Left lung (tissue), 14 donors: ENCODE measurements at regions of chr13 and their contacts with region 1.

Region 1: GRCh38 chr13:99033814-99034213 is 56.0 kb upstream of the DOCK9 start:
- DNase-seq: peak in 1 of 4 donors; percentile 40
- ATAC-seq: peak; percentile 86
- H3K4me3 ChIP-seq: no peak overlapping the region
- H3K27ac ChIP-seq: no peak overlapping the region
- H3K4me1 ChIP-seq: peaks cover 0 to 12% of the 10 kb centered on the region in 2 donors
- H3K27me3 ChIP-seq: peaks cover 0 to 80% of the 10 kb centered on the region in 2 donors
- CTCF ChIP-seq: peak; percentile 46 to 52

Region 2: DNA sequence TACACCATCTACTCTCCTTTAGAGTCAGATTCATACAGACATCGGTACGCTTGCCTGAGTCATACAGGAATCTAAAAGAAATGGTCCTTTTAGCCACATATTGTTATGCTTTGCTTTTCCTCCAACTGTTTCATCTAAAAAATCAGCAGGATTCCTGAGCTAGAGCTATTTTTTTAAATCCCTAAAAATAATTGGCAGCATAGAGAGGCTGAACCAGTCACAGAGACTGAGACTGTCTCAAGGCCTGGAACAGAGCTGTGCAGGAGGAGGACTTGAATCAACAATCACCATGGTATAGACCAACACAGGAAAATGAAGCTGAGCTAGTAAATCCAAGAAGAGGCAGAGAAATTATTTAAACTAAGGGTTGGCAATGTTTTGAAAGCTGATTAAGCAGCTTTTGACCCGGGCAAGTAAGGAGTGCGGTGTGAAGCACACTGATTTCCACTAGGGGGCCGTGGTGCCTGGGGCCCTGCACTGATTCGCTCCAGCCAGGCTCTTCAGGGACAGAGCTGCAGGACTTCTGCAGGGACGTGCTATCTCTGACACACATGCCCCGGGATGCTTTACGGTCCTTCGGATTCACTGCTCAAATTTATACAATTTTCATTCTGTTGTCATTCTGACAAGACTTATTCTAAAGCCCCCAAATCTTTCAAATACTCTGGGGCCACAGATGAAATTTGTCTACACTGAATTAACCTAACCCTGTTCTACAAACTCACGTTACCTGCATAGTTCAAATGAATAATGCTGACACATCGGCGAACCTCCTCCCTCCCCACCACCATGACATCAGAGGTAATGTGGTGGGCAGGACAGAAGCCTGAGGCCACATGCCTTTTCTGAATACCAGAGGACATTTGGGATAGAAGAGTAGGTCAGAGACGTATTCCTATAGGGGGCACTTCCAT is 193.7 kb before region 1 on chr13:
- intact Hi-C with region 1: loop called in 1 of 2 experiments (anchors 10 kb)
- DNase-seq: peak in 1 of 4 donors; percentile 57
- ATAC-seq: peak; percentile 93
- H3K4me3 ChIP-seq: no peak overlapping the region
- H3K27ac ChIP-seq: no peak overlapping the region
- H3K4me1 ChIP-seq: peaks cover 0 to 7% of the 10 kb centered on the region in 2 donors
- H3K27me3 ChIP-seq: no peaks in the 10 kb centered on the region
- CTCF ChIP-seq: peak; percentile 77 to 81

Region 3: GRCh38 chr13:98890186-98890585 is 143.6 kb before region 1 on chr13:
- intact Hi-C with region 1: loop called in 1 of 2 experiments (anchors 10 kb)
- DNase-seq: no peak
- ATAC-seq: peak; percentile 29
- H3K4me3 ChIP-seq: no peak overlapping the region
- H3K27ac ChIP-seq: no peak overlapping the region
- H3K4me1 ChIP-seq: peaks cover 6 to 20% of the 10 kb centered on the region in 2 donors
- H3K27me3 ChIP-seq: no peaks in the 10 kb centered on the region
- CTCF ChIP-seq: no peak

Region 4: GRCh38 chr13:99871249-99871898 is 837.6 kb after region 1 on chr13:
- intact Hi-C with region 1: no loop called
- DNase-seq: no peak
- ATAC-seq: peak; percentile 41
- H3K4me3 ChIP-seq: no peak overlapping the region
- H3K27ac ChIP-seq: no peak overlapping the region
- H3K4me1 ChIP-seq: no peaks in the 10 kb centered on the region
- H3K27me3 ChIP-seq: no peaks in the 10 kb centered on the region
- CTCF ChIP-seq: no peak